ENCODE measurements at regions of chr3 and their contacts with region 1.

Region 1: DNA sequence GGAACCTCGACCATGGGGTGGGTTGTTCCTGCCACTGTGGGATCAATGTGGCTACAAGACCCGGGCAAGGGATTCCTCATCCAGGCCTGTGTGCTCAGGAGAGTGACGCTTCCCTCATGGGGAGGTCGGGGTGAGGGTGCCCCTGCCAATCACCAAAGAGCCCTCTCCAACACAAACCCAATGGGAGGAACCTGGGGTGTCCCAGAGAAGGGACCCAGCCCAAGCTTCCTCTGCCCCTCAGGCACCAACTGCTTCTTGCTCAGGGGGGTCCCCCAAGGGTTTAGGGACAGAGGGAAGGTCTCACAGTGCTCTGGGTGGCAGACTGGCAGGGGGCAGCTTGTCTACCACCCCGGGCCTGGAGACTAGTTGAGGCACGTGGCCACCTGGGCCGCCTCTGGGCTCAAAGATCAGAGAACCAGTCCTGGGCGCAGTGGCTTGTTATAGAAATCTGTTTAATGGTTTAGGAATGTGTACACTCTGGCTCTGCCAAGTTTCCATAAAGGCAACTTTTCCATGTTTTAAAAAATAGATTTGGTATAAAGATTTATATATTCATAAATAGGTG is 26.6 kb downstream of the GP9 start:
- DNase-seq: no peak

Region 2: GRCh38 chr3:128969993-128970739 is 117.1 kb before region 1 on chr3:
- intact Hi-C with region 1: loop called (anchors 10 kb)
- DNase-seq: no peak

Region 3: DNA sequence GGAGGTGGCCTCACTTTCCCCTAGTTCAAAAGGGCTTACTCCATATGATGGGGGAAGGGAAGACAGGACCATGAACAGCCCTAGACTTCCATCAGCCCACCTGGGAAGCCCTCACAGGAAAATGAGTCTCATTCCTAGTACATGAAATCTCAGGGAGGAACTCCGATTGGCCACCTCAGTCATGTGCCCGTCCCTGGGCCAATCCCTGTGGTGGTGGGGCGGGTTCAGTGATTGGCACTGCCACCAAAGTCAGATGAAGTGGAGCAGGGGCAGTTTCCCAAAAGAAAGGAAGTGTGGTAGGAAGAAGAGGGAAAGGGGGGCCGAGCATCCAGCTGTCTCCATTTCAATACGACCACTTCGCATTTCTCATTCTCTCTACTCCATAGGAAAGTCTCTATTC is 52.6 kb before region 1 on chr3:
- intact Hi-C with region 1: no loop called
- DNase-seq: no peak

Region 4: GRCh38 chr3:129305592-129306091 is 218.4 kb after region 1 on chr3:
- intact Hi-C with region 1: no loop called
- DNase-seq: peak; percentile 91